ENCODE measurements at regions of chr21 and their contacts with region 1.

Region 1: DNA sequence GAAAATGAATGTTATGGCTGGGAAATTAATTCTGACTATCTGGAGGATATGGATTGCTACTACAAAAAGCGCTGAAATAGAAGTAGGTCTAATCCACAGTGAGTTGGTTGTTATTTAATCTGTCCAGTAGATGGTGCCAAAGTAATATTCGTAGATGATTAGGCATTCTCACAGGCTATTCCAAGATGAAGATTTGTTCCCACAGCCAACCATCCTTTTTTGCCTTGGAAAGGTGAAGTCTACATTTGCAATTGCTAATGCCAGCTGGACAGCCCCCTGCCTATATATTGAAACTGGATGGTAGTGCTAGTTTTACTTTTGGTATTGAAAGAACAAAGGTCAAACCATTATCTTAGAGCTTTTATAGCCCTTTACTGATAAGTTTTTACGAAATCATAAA is 43.8 kb downstream of the RBM11 start:
- DNase-seq: peak in 2 of 3 donors; percentile 32 to 34
- H3K4me3 ChIP-seq: no peak overlapping the region
- H3K4me3 Mint-ChIP-seq: no peak overlapping the region
- H3K27ac ChIP-seq: no peak overlapping the region
- H3K27ac Mint-ChIP-seq: no peak overlapping the region
- H3K4me1 ChIP-seq: no peaks in the 10 kb centered on the region
- H3K4me1 Mint-ChIP-seq: no peaks in the 10 kb centered on the region
- H3K27me3 ChIP-seq: no peaks in the 10 kb centered on the region
- H3K27me3 Mint-ChIP-seq: no peaks in the 10 kb centered on the region
- CTCF ChIP-seq: peak; percentile 74

Region 2: GRCh38 chr21:14448784-14449183 is 189.0 kb after region 1 on chr21:
- intact Hi-C with region 1: no loop called
- DNase-seq: no peak
- H3K4me3 ChIP-seq: no peak overlapping the region
- H3K4me3 Mint-ChIP-seq: no peak overlapping the region
- H3K27ac ChIP-seq: no peak overlapping the region
- H3K27ac Mint-ChIP-seq: no peak overlapping the region
- H3K4me1 ChIP-seq: no peaks in the 10 kb centered on the region
- H3K4me1 Mint-ChIP-seq: peaks cover 3% of the 10 kb centered on the region
- H3K27me3 ChIP-seq: no peaks in the 10 kb centered on the region
- H3K27me3 Mint-ChIP-seq: peaks cover 0 to 2% (median 0%) of the 10 kb centered on the region in 3 donors
- CTCF ChIP-seq: no peak

Region 3: DNA sequence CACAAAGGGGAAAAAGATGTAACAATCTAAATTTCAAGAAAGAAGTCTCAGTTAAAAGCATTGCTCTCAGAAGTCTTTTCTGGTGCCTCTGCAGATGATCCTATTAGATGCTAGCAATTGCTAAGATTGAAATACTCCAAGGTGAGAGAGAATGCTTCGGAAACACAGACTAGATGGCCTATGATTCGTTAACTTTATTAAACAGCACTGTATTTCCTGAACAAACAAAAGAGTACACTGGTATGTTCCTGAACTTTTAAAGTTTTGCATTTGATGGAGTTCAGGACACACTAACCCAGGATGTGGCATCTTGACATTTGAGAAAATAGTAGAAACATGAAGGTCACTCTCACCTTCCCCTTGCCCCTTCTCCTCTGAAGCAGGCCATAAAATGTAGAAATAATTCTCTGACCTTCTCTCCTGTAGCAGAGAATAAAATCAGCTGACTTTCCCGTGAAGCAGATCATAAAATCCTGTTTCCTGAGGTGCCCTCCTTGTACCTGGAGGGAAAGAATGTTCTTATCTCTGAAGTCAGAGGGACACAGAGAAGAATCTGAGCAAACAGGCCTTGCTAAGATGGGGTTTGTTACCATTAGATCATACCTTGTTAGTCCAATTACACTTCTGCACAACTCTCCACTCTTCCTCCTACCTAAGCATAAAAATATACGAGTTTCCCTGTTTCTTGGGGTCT is 1327.2 kb after region 1 on chr21:
- intact Hi-C with region 1: loop called in 1 of 2 experiments (anchors 10 kb)
- DNase-seq: no peak
- H3K4me3 ChIP-seq: no peak overlapping the region
- H3K4me3 Mint-ChIP-seq: no peak overlapping the region
- H3K27ac ChIP-seq: no peak overlapping the region
- H3K27ac Mint-ChIP-seq: no peak overlapping the region
- H3K4me1 ChIP-seq: no peaks in the 10 kb centered on the region
- H3K4me1 Mint-ChIP-seq: no peaks in the 10 kb centered on the region
- H3K27me3 ChIP-seq: no peaks in the 10 kb centered on the region
- H3K27me3 Mint-ChIP-seq: peaks cover 0 to 4% (median 3%) of the 10 kb centered on the region in 3 donors
- CTCF ChIP-seq: no peak